Activated naive CD4-positive, alpha-beta T cell treated with anti-CD3 and anti-CD28 coated beads for 36 hours (primary cell): ENCODE measurements at regions of chr15 and their contacts with region 1.

Region 1: DNA sequence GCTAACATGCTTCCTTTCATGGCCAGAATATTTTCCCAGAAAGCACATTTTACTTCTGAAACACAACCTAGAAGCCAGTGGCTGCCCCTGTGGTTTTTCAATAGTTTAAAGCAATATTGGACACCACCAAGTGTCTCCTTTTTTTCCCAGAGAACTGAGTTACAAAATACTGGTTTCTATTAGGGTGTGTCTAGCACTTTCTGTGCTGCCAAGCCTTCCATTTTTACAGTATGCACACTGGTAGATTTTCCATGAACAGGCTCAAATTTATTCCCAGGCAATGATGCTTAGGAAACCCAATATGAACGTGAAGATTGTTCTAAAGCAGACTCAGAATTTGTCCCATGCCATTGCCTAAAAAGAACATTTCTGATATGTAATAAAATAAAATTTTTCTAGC is 7.2 kb downstream of the TNFAIP8L3 start:
- DNase-seq: no peak
- H3K4me3 Mint-ChIP-seq: no peak overlapping the region
- H3K27ac Mint-ChIP-seq: no peak overlapping the region
- H3K4me1 Mint-ChIP-seq: no peaks in the 10 kb centered on the region
- H3K27me3 Mint-ChIP-seq: peaks cover 30% of the 10 kb centered on the region

Region 2: DNA sequence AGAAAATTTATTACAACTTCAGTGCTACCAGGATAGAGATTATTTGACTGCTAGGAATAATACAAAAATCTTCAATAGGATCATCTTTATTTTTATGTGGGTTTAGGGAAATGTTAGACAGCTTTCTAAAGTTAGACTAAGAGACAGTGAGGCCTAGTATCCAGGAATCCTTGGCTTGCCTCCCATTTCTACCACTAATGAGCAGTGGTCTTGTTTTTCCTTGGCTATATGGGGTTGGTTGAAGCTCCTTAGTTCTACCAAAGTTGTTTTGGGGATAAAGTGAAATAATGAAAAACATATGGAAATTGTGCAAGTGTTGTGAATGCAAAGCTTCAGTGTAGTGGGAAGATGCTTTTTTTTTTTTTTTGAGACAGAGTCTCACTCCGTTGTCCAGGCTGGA is 162.2 kb before region 1 on chr15:
- CTCF ChIA-PET with region 1: no interaction called
- intact Hi-C with region 1: no loop called
- DNase-seq: no peak
- H3K4me3 Mint-ChIP-seq: no peak overlapping the region
- H3K27ac Mint-ChIP-seq: no peak overlapping the region
- H3K4me1 Mint-ChIP-seq: peaks cover 4% of the 10 kb centered on the region
- H3K27me3 Mint-ChIP-seq: no peaks in the 10 kb centered on the region

Region 3: GRCh38 chr15:51065781-51066180 is 21.7 kb before region 1 on chr15:
- CTCF ChIA-PET with region 1: no interaction called
- intact Hi-C with region 1: loop called (anchors 1 kb)
- DNase-seq: no peak
- H3K4me3 Mint-ChIP-seq: no peak overlapping the region
- H3K27ac Mint-ChIP-seq: no peak overlapping the region
- H3K4me1 Mint-ChIP-seq: peaks cover 4% of the 10 kb centered on the region
- H3K27me3 Mint-ChIP-seq: peaks cover 11% of the 10 kb centered on the region